Dorsolateral prefrontal cortex (tissue), 120 donors: ENCODE measurements at regions of chr17 and their contacts with region 1.

Region 1: GRCh38 chr17:4420692-4421131 is 13.0 kb upstream of the SPNS3 start:
- DNase-seq: peak in 9 of 10 donors; percentile 58 to 79 (median 61)
- H3K4me3 ChIP-seq: peak overlapping the region in 8 of 59 donors; percentile 7 to 32 (median 15)
- H3K27ac ChIP-seq: peak overlapping the region in 3 of 59 donors; percentile 30 to 56 (median 35)
- H3K27me3 ChIP-seq: no peaks in the 10 kb centered on the region
- CTCF ChIP-seq: peak; percentile 68 to 95 (median 90)

Region 2: GRCh38 chr17:4483012-4483840 is 62.5 kb after region 1 on chr17:
- intact Hi-C with region 1: no loop called
- DNase-seq: no peak
- H3K4me3 ChIP-seq: no peak overlapping the region
- H3K27ac ChIP-seq: no peak overlapping the region
- H3K27me3 ChIP-seq: no peaks in the 10 kb centered on the region
- CTCF ChIP-seq: no peak

Region 3: GRCh38 chr17:4498461-4499397 is 78.0 kb after region 1 on chr17 and contains the start of gene SPNS2:
- intact Hi-C with region 1: loop called (anchors 5 to 10 kb)
- DNase-seq: peak; percentile 44 to 94 (median 82)
- H3K4me3 ChIP-seq: peak within 1 kb of the TSS; percentile 55 to 89 (median 71)
- H3K27ac ChIP-seq: peak within 1 kb of the TSS in 57 of 59 donors; percentile 18 to 89 (median 79)
- H3K27me3 ChIP-seq: peaks cover 0 to 4% (median 0%) of the 10 kb centered on the region in 45 donors
- CTCF ChIP-seq: peak in 30 of 56 donors; percentile 11 to 56 (median 32)
- total RNA-seq, gene SPNS2: 41.1 to 115 (median 69.7) TPM

Region 4: GRCh38 chr17:4534026-4534914 is 113.6 kb after region 1 on chr17:
- intact Hi-C with region 1: loop called in 1 of 2 experiments (anchors 5 kb)
- DNase-seq: peak; percentile 35 to 98 (median 94)
- H3K4me3 ChIP-seq: peak overlapping the region in 56 of 59 donors; percentile 4 to 62 (median 42)
- H3K27ac ChIP-seq: peak overlapping the region; percentile 85 to 100 (median 98)
- H3K27me3 ChIP-seq: no peaks in the 10 kb centered on the region
- CTCF ChIP-seq: peak in 30 of 56 donors; percentile 8 to 50 (median 32)

Region 5: DNA sequence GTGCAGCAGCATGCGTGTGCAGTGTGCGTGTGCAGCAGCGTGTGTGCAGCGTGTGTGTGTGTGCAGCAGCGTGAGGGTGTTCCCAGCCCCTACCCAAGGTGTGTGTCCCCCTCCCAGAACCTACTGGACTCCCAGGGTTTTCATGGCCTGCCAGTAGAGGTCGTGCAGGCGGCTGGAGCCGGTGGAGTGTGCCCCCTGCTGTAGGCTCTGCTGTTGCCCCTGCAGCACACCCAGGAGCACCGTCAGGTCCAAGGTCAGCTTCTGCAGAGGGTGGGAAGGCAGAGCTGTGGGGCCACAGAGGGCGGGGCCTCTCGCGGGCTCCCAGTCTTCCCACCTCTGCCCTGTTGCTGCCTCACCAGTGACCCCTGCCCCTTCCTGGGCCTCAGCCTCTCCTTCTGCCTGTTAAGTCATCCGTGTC is 119.5 kb after region 1 on chr17:
- intact Hi-C with region 1: loop called (anchors 5 kb)
- DNase-seq: no peak
- H3K4me3 ChIP-seq: peak overlapping the region in 2 of 59 donors; percentile 3 to 31
- H3K27ac ChIP-seq: peak overlapping the region in 56 of 59 donors; percentile 27 to 100 (median 86)
- H3K27me3 ChIP-seq: no peaks in the 10 kb centered on the region
- CTCF ChIP-seq: peak in 36 of 56 donors; percentile 10 to 56 (median 30)

Region 6: GRCh38 chr17:4554997-4555799 is 134.5 kb after region 1 on chr17 and contains the start of gene MYBBP1A:
- intact Hi-C with region 1: loop called in 1 of 2 experiments (anchors 5 kb)
- DNase-seq: peak; percentile 91 to 97 (median 95)
- H3K4me3 ChIP-seq: peak within 1 kb of the TSS; percentile 58 to 99 (median 85)
- H3K27ac ChIP-seq: peak within 1 kb of the TSS in 58 of 59 donors; percentile 29 to 97 (median 88)
- H3K27me3 ChIP-seq: no peaks in the 10 kb centered on the region
- CTCF ChIP-seq: peak in 55 of 56 donors; percentile 18 to 73 (median 53)
- total RNA-seq, gene MYBBP1A: 49.9 to 110 (median 68.5) TPM

Region 7: DNA sequence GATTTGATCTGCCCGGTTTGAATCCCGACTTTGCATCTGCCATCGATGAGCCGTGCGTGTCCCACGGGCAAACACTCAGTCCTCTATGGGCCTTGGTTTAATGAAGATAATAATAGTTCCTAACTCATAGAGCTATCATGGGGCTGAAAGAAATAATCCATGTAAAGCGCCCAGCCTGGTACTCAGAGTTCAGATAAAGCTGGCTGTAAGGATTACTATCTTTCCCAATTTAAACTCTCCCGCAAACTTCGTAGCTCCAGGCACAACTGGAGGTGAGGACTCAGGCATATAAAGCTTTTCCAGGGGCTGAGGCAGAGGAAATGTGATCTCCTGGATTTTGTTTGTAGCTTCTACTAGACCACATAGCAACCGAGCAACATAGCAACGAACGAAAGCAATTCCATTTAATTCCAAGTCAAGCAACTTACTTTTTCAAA is 204.5 kb after region 1 on chr17:
- intact Hi-C with region 1: loop called (anchors 2 to 10 kb)
- DNase-seq: no peak
- H3K4me3 ChIP-seq: peak overlapping the region in 1 of 59 donors; percentile 37
- H3K27ac ChIP-seq: no peak overlapping the region
- H3K27me3 ChIP-seq: peaks cover 0 to 3% (median 0%) of the 10 kb centered on the region in 45 donors
- CTCF ChIP-seq: no peak